H1 (cell line): ENCODE measurements at regions of chr3 and their contacts with region 1.

Region 1: GRCh38 chr3:138397983-138398382 is 36.4 kb upstream of the ESYT3 start:
- DNase-seq: no peak
- H3K4me3 ChIP-seq: no peak overlapping the region
- H3K27ac ChIP-seq: no peak overlapping the region
- H3K4me1 ChIP-seq: peaks cover 0 to 13% (median 7%) of the 10 kb centered on the region in 4 experiments; a peak in 6 of 7 replicates
- H3K27me3 ChIP-seq: no peaks in the 10 kb centered on the region
- CTCF ChIP-seq: no peak
- EP300 ChIP-seq: no peak
- POLR2A ChIP-seq: no peak
- RAD21 ChIP-seq: no peak

Region 2: GRCh38 chr3:138408751-138409161 is 10.8 kb after region 1 on chr3:
- CTCF ChIA-PET with region 1: interaction called, 25 read pairs
- POLR2A ChIA-PET with region 1: interaction called, 13 read pairs
- DNase-seq: no peak
- H3K4me3 ChIP-seq: no peak overlapping the region
- H3K27ac ChIP-seq: 0 out of 2 replicates have a peak overlapping the region, but pooled peaks have one; percentile 39
- H3K4me1 ChIP-seq: peaks cover 5 to 21% (median 10%) of the 10 kb centered on the region in 4 experiments
- H3K27me3 ChIP-seq: no peaks in the 10 kb centered on the region; a peak in 1 of 7 replicates
- CTCF ChIP-seq: no peak
- EP300 ChIP-seq: no peak
- POLR2A ChIP-seq: no peak
- RAD21 ChIP-seq: no peak